CD8-positive, alpha-beta T cell (primary cell): ENCODE measurements at regions of chr7 and their contacts with region 1.

Region 1: GRCh38 chr7:47266131-47266706 is 315.7 kb downstream of the TNS3 start:
- DNase-seq: peak in 3 of 9 experiments; percentile 26 to 48 (median 44)
- ATAC-seq: peak; percentile 46
- H3K4me3 ChIP-seq: no peak overlapping the region
- H3K4me3 Mint-ChIP-seq: no peak overlapping the region
- H3K27ac ChIP-seq: no peak overlapping the region
- H3K27ac Mint-ChIP-seq: no peak overlapping the region
- H3K4me1 ChIP-seq: no peaks in the 10 kb centered on the region
- H3K4me1 Mint-ChIP-seq: no peaks in the 10 kb centered on the region
- H3K27me3 ChIP-seq: no peaks in the 10 kb centered on the region
- H3K27me3 Mint-ChIP-seq: no peaks in the 10 kb centered on the region
- CTCF ChIP-seq: peak; percentile 60

Region 2: DNA sequence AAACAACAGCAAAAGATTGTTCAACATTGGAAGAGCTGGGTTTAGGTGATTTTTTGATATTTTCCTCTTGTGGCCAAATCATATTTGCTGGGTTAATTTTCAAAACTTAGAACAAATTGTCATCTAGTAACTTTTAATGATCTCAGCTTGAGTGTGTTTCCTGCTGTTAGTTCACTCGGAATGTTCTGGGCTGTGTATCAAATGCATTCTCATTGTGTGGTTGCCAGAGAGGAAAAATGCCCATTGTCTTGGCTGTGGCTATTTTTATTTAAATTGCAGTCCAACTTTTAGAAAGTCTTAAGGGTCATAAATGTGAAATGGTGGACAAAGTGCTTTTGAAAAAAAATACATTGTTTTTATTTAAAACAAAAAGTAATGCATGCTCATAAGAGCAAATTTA is 226.3 kb before region 1 on chr7:
- CTCF ChIA-PET with region 1: no interaction called
- POLR2A ChIA-PET with region 1: no interaction called
- intact Hi-C with region 1: no loop called
- DNase-seq: no peak
- ATAC-seq: no peak
- H3K4me3 ChIP-seq: no peak overlapping the region
- H3K4me3 Mint-ChIP-seq: no peak overlapping the region
- H3K27ac ChIP-seq: no peak overlapping the region
- H3K27ac Mint-ChIP-seq: no peak overlapping the region
- H3K4me1 ChIP-seq: no peaks in the 10 kb centered on the region
- H3K4me1 Mint-ChIP-seq: no peaks in the 10 kb centered on the region
- H3K27me3 ChIP-seq: no peaks in the 10 kb centered on the region
- H3K27me3 Mint-ChIP-seq: no peaks in the 10 kb centered on the region
- CTCF ChIP-seq: no peak

Region 3: DNA sequence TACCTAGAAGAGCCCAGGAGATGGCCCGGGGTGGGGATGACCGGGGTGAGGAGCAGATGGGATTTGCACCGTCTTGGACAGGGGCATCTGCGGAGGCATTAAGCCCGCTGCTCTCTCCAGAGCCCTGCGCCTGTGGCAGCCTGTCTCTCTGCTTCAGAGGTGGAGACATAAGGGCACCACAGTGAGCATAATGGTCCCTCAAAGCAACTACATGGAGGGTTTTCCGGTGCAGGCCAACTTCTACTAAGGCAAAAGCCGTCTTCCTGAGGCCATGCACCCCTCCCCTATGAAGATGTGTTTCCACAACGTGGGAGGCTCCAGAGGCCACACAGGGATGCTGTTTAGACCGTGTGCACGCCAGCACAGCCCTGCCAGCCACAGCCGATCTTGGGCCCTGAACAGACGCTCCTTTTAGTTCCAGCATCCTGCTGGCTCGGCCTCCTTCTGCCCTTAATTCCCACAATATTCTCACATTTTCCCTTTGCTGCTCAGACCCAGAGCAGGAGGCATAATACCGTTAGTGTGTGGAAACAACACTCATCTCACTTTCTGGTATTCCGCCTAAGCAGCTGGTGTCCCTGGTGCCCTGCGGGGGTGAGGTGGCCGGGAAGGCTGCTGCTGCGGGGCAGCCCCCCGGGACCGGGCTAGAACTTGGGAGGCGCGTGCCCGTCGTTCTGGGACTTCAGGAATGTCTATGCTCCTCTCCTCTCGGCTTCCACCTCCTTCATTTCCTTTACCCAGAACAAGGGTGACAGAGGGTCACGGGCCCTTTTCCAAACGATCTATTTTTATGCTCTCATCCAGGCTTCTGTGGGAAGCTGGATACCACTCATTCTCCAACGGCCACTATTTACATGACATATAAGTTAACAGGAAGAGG is 48.7 kb after region 1 on chr7:
- CTCF ChIA-PET with region 1: no interaction called
- POLR2A ChIA-PET with region 1: no interaction called
- intact Hi-C with region 1: no loop called
- DNase-seq: no peak
- ATAC-seq: no peak
- H3K4me3 ChIP-seq: no peak overlapping the region
- H3K4me3 Mint-ChIP-seq: no peak overlapping the region
- H3K27ac ChIP-seq: no peak overlapping the region
- H3K27ac Mint-ChIP-seq: no peak overlapping the region
- H3K4me1 ChIP-seq: no peaks in the 10 kb centered on the region
- H3K4me1 Mint-ChIP-seq: peaks cover 10% of the 10 kb centered on the region
- H3K27me3 ChIP-seq: peaks cover 0 to 2% of the 10 kb centered on the region in 2 experiments
- H3K27me3 Mint-ChIP-seq: peaks cover 2% of the 10 kb centered on the region
- CTCF ChIP-seq: no peak

Region 4: DNA sequence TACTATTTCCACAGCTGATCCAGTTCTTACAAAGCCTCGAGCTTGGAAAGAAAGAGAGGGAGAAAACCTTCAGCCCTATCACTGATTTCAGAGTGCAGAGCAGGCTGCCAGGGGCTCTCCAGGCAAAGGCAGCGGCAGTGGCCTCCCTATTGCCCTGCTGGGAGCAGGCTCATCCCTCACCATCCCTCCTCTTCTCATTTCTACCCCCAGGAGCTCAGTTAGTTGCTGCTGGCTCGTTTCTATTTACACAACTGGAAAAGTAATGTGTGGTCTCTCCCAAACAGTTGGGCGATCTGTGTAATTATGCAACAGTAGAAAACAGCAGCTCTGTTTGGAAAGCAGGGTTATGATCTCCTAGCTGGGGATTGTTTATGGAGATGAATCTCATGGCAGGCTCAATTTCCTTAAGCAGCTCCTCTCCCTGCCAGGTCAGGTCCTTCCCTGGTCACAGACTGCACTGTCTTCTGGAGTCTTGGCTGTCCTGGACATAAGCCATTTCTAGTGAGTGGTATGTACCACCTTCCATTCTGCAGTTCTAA is 344.4 kb after region 1 on chr7:
- CTCF ChIA-PET with region 1: no interaction called
- POLR2A ChIA-PET with region 1: no interaction called
- intact Hi-C with region 1: no loop called
- DNase-seq: no peak
- ATAC-seq: no peak
- H3K4me3 ChIP-seq: no peak overlapping the region
- H3K4me3 Mint-ChIP-seq: no peak overlapping the region
- H3K27ac ChIP-seq: no peak overlapping the region
- H3K27ac Mint-ChIP-seq: no peak overlapping the region
- H3K4me1 ChIP-seq: no peaks in the 10 kb centered on the region
- H3K4me1 Mint-ChIP-seq: no peaks in the 10 kb centered on the region
- H3K27me3 ChIP-seq: no peaks in the 10 kb centered on the region
- H3K27me3 Mint-ChIP-seq: no peaks in the 10 kb centered on the region
- CTCF ChIP-seq: no peak

Region 5: DNA sequence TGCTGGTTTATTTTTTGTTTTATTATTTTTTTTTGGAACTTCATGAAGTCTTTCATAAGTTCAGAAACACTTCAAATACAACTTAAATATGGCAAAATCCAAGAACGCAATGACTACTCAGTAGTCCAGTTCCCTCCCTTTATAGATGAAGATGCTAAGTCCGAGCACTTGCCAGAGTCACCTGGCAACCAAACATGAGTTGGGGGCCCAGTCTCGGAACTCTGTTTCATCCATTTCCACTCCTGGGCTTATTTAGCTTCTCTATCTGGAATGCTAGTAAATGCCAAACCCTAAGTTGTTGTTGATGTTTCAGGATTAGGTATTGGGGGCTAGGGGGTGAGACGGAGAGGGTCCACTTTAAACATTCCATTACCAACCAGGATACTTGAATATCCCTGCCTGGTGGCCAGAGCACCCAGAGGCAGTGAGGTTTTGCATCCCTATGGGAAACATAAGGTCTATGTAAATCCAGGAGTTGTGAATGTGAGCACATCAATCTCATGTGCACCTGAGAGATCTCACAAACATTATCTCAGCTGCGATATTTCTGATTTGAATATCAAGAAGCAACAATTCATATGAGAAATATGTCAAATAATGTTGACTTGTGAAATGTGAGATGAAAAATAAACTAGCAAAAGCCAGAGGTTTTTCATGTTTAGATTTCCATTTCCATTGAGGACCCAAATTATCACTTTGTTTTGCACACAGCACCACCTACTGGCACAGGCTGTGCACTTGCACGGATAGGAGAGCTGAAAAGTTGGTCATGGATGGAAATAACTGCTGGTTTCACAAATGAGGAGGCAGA is 552.8 kb after region 1 on chr7:
- CTCF ChIA-PET with region 1: interaction called, 36 read pairs
- POLR2A ChIA-PET with region 1: no interaction called
- intact Hi-C with region 1: loop called in 1 of 2 experiments (anchors 1 kb)
- DNase-seq: peak in 5 of 9 experiments; percentile 4 to 53 (median 37)
- ATAC-seq: no peak
- H3K4me3 ChIP-seq: no peak overlapping the region
- H3K4me3 Mint-ChIP-seq: no peak overlapping the region
- H3K27ac ChIP-seq: no peak overlapping the region
- H3K27ac Mint-ChIP-seq: no peak overlapping the region
- H3K4me1 ChIP-seq: no peaks in the 10 kb centered on the region
- H3K4me1 Mint-ChIP-seq: no peaks in the 10 kb centered on the region
- H3K27me3 ChIP-seq: no peaks in the 10 kb centered on the region
- H3K27me3 Mint-ChIP-seq: no peaks in the 10 kb centered on the region
- CTCF ChIP-seq: peak; percentile 75

Region 6: GRCh38 chr7:48832303-48832845 is 1566.2 kb after region 1 on chr7:
- CTCF ChIA-PET with region 1: no interaction called
- POLR2A ChIA-PET with region 1: no interaction called
- intact Hi-C with region 1: no loop called
- DNase-seq: no peak
- ATAC-seq: no peak
- H3K4me3 ChIP-seq: no peak overlapping the region
- H3K4me3 Mint-ChIP-seq: no peak overlapping the region
- H3K27ac ChIP-seq: no peak overlapping the region
- H3K27ac Mint-ChIP-seq: no peak overlapping the region
- H3K4me1 ChIP-seq: no peaks in the 10 kb centered on the region
- H3K4me1 Mint-ChIP-seq: no peaks in the 10 kb centered on the region
- H3K27me3 ChIP-seq: no peaks in the 10 kb centered on the region
- H3K27me3 Mint-ChIP-seq: no peaks in the 10 kb centered on the region
- CTCF ChIP-seq: no peak